Dorsolateral prefrontal cortex (tissue), 120 donors: ENCODE measurements at regions of chr2 and their contacts with region 1.

Region 1: GRCh38 chr2:99940963-99941362 is 201.4 kb downstream of the AFF3 start:
- DNase-seq: no peak
- H3K4me3 ChIP-seq: no peak overlapping the region
- H3K27ac ChIP-seq: no peak overlapping the region
- H3K27me3 ChIP-seq: no peaks in the 10 kb centered on the region
- CTCF ChIP-seq: no peak

Region 2: DNA sequence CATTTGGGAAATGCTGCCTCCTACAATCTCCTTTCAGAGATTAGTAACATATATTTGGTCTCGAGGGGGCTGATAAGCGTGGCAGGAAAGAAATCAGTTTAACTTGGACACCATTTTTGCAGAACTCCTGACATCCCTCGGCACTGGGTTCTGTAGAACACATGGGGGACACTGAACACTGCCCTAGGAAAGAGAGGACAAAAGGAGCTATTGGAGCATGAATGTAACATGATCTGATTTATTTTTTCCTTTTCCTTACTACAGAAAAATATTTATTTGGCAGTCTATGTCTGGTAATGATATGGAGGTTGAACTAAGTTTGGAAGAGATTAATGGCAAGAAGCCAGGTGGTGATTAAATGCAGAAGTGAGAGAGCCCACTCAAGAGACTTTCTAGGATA is 47.6 kb after region 1 on chr2:
- intact Hi-C with region 1: loop called in 1 of 2 experiments (anchors 2 kb)
- DNase-seq: no peak
- H3K4me3 ChIP-seq: no peak overlapping the region
- H3K27ac ChIP-seq: no peak overlapping the region
- H3K27me3 ChIP-seq: no peaks in the 10 kb centered on the region
- CTCF ChIP-seq: no peak

Region 3: GRCh38 chr2:101725515-101726192 is 1784.7 kb after region 1 on chr2:
- intact Hi-C with region 1: no loop called
- DNase-seq: no peak
- H3K4me3 ChIP-seq: no peak overlapping the region
- H3K27ac ChIP-seq: peak overlapping the region in 39 of 59 donors; percentile 0 to 73 (median 33)
- H3K27me3 ChIP-seq: no peaks in the 10 kb centered on the region
- CTCF ChIP-seq: peak in 39 of 56 donors; percentile 11 to 56 (median 32)